Heart left ventricle (tissue), 16 donors: ENCODE measurements at regions of chr7 and their contacts with region 1.

Region 1: DNA sequence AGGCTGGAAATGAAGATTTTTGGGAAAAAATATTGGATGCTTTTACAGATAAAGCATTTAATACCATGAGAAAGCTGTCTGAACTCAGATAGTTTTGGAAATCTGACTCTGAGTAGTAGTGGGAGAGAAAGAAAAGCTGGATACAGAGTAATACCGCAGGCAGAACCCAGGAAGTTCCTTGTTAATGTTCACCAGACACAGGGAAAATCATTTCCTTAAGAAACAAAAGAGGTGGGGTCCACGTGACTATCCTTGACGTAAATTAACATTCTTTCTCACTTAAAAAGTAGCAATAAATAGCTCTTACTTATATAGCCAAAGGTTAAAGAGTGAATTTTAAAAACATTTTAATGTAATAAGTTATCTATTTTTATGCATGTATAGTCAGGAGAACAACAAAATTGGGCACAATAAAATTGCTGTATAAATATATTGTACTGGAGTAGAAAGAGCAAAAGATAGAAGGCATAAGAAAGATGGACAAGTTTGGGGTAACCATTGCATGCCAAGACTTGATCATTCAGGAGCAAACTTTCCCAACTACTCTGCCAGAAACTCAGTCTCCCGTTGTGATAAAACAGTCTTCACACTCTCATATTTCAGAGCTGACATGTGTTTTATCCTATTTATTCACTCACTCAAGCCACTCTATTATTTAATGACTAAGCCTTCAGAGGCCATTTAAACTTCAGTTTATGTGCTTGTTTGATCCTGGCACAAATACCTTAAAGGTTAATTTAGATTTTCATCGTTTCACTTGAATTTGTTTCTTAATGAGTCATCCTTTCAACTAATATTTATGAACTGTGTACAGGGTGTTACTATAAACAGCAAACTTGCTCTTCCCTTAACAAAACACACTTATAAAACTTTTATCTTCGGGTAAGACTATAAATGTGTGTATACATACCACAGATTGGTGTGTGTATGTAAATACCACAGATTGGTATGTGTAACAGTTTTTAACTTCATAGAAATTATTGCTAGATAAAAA is 143.1 kb downstream of the GNAI1 start:
- DNase-seq: no peak
- ATAC-seq: peak in 3 of 4 donors; percentile 42 to 83 (median 67)
- H3K4me3 ChIP-seq: no peak overlapping the region
- H3K27ac ChIP-seq: peak overlapping the region; percentile 1 to 75 (median 56)
- H3K4me1 ChIP-seq: peaks cover 0 to 50% (median 23%) of the 10 kb centered on the region in 12 donors
- H3K27me3 ChIP-seq: no peaks in the 10 kb centered on the region
- CTCF ChIP-seq: no peak
- POLR2A ChIP-seq: no peak

Region 2: DNA sequence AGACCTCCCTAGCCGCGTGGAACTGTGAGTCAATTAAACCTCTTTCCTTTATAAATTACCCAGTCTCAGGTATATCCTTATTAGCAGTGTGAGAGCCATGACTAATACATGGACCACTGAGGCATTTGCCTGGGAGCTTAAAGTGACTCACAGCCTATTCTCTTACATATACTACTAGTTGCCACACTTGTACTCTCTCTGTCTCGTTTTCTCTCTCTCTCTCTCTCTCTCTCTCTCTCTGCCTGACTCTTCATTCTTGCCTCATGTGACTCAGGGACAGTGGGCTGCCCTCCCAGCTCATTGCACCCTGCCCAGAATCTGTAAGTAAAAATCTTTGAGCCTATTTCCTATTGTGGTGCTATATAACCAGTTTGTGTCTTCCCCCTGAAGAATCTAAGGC is 585.7 kb before region 1 on chr7:
- intact Hi-C with region 1: no loop called
- DNase-seq: no peak
- ATAC-seq: no peak
- H3K4me3 ChIP-seq: no peak overlapping the region
- H3K27ac ChIP-seq: no peak overlapping the region
- H3K4me1 ChIP-seq: no peaks in the 10 kb centered on the region
- H3K27me3 ChIP-seq: no peaks in the 10 kb centered on the region
- CTCF ChIP-seq: no peak
- POLR2A ChIP-seq: no peak

Region 3: DNA sequence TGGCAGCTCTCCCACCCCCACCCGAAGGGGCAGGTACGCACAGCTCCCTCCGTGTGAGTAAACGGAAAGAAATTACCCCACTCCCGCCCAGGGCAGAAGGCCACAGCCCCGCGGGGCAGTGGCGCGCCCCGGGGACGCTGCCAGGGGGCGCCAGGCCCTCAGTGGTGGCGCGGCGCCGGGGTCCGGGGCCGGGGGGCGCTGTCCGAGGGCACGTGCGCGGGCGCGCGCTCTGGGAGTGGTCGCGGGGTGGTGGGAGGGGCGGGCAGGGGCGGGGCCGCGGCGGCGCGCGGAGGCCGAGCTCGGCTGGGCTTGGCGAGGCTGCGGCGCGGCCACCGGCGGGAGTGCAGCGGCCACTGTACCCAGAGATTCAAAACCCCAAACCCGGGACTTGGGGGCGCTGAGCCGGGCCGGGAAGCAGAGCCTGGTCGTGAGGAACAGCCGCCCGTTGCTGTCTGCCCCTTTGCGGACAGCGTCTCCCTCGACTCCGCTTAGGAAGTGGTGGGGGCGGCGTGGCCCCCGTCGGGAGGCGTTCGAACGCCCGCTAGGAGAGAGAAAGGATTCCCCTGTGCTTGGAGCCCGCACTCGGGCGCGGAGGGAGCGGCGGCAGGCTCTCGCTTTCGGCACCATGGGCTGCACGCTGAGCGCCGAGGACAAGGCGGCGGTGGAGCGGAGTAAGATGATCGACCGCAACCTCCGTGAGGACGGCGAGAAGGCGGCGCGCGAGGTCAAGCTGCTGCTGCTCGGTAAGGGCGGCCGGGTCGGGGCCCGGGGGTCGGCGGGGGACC is 143.0 kb before region 1 on chr7 and contains the start of gene GNAI1:
- intact Hi-C with region 1: loop called in 5 of 10 experiments (anchors 5 to 10 kb)
- DNase-seq: peak; percentile 66 to 84 (median 72)
- ATAC-seq: peak; percentile 48 to 93 (median 86)
- H3K4me3 ChIP-seq: peak within 1 kb of the TSS; percentile 62 to 99 (median 97)
- H3K27ac ChIP-seq: peak within 1 kb of the TSS; percentile 63 to 94 (median 86)
- H3K4me1 ChIP-seq: peaks cover 0 to 27% (median 11%) of the 10 kb centered on the region in 12 donors
- H3K27me3 ChIP-seq: peaks cover 0 to 5% (median 0%) of the 10 kb centered on the region in 9 donors
- CTCF ChIP-seq: peak in 10 of 12 donors; percentile 1 to 62 (median 47)
- POLR2A ChIP-seq: peak in 1 of 2 donors; percentile 70
- total RNA-seq, gene GNAI1: 9.9 to 26.1 (median 16.5) TPM

Region 4: DNA sequence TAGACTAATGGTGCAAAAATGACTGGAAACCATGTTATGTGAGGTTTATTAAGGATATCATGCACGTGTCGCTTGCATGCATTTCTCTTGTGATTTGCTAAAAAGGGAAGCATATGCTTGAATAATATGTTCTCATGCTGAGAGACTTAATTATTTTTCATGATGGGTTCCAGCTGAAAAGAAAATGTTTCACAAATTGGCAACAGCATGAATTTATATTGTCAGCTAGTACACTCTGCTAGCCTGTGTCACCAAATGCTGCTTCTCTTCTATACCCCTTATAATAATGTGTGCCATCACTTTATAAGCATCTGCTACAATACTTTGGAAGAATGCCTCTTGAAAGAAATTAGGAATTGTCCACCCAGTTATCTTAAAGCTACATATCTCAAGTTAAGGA is 80.1 kb before region 1 on chr7:
- intact Hi-C with region 1: loop called in 1 of 10 experiments (anchors 2 kb)
- DNase-seq: no peak
- ATAC-seq: no peak
- H3K4me3 ChIP-seq: no peak overlapping the region
- H3K27ac ChIP-seq: no peak overlapping the region
- H3K4me1 ChIP-seq: peaks cover 0 to 10% (median 0%) of the 10 kb centered on the region in 12 donors
- H3K27me3 ChIP-seq: no peaks in the 10 kb centered on the region
- CTCF ChIP-seq: no peak
- POLR2A ChIP-seq: no peak

Region 5: GRCh38 chr7:80208700-80209099 is 69.0 kb before region 1 on chr7:
- intact Hi-C with region 1: loop called in 2 of 10 experiments (anchors 2 to 10 kb)
- DNase-seq: no peak
- ATAC-seq: no peak
- H3K4me3 ChIP-seq: no peak overlapping the region
- H3K27ac ChIP-seq: no peak overlapping the region
- H3K4me1 ChIP-seq: no peaks in the 10 kb centered on the region
- H3K27me3 ChIP-seq: no peaks in the 10 kb centered on the region
- CTCF ChIP-seq: no peak
- POLR2A ChIP-seq: no peak

Region 6: GRCh38 chr7:80330434-80330833 is 52.7 kb after region 1 on chr7:
- intact Hi-C with region 1: loop called in 2 of 10 experiments (anchors 2 to 5 kb)
- DNase-seq: no peak
- ATAC-seq: no peak
- H3K4me3 ChIP-seq: no peak overlapping the region
- H3K27ac ChIP-seq: no peak overlapping the region
- H3K4me1 ChIP-seq: peaks cover 0 to 14% (median 3%) of the 10 kb centered on the region in 12 donors
- H3K27me3 ChIP-seq: no peaks in the 10 kb centered on the region
- CTCF ChIP-seq: no peak
- POLR2A ChIP-seq: no peak

Region 7: GRCh38 chr7:80335511-80336231 is 57.9 kb after region 1 on chr7:
- intact Hi-C with region 1: loop called in 2 of 10 experiments (anchors 2 to 5 kb)
- DNase-seq: no peak
- ATAC-seq: peak in 2 of 4 donors; percentile 56 to 67
- H3K4me3 ChIP-seq: no peak overlapping the region
- H3K27ac ChIP-seq: peak overlapping the region in 7 of 12 donors; percentile 19 to 49 (median 31)
- H3K4me1 ChIP-seq: peaks cover 0 to 21% (median 7%) of the 10 kb centered on the region in 12 donors
- H3K27me3 ChIP-seq: no peaks in the 10 kb centered on the region
- CTCF ChIP-seq: no peak
- POLR2A ChIP-seq: no peak